SK-N-SH (cell line): ENCODE measurements at regions of chr5 and their contacts with region 1.

Region 1: DNA sequence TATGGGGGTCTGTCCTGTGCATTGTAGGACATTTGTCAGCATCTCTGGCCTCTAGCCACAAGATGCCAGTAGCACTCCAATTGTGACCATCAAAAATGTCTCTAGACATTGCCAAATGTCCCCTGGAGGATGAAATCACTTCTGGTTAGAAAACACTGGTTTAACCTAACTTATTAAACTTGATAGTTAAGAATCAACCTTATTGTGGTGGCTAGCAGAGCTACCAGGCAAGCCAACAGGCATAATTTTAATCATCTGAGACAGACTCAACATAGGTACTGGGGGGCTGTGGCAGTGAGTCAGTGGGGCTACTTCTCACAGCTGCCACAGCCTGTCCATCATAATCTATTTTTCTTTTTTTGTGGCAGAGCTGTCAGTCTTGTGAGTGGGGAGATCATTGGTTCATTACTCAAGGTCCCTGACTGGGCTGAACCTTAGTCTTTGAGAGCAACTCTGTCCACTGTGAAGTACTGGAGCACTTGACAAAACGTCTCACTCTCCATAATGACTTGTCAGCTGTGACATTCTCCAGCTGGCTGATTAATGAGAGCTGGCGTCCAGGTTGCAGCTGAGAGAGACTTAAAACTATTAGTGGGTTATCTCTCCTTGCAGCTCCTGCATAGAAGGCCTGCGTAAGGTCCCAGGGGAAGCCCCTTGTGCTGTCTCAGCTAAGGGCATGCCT is 107.9 kb downstream of the DCP2 start:
- DNase-seq: peak; percentile 51
- H3K4me3 ChIP-seq: no peak overlapping the region
- H3K27ac ChIP-seq: peak overlapping the region in 1 of 2 experiments; percentile 76; a peak in 2 of 4 replicates
- H3K4me1 ChIP-seq: peaks cover 0 to 18% of the 10 kb centered on the region in 2 experiments; a peak in 2 of 4 replicates
- H3K27me3 ChIP-seq: no peaks in the 10 kb centered on the region; the same call in 1 of the 2 replicates
- CTCF ChIP-seq: no peak
- EP300 ChIP-seq: peak in 1 of 2 experiments; percentile 82; a peak in 2 of 4 replicates
- RAD21 ChIP-seq: peak; percentile 62

Region 2: GRCh38 chr5:113100981-113101380 is 16.4 kb after region 1 on chr5:
- CTCF ChIA-PET with region 1: no interaction called
- POLR2A ChIA-PET with region 1: no interaction called
- DNase-seq: no peak
- H3K4me3 ChIP-seq: no peak overlapping the region
- H3K27ac ChIP-seq: no peak overlapping the region
- H3K4me1 ChIP-seq: peaks cover 0 to 3% of the 10 kb centered on the region in 2 experiments; a peak in 1 of 4 replicates
- H3K27me3 ChIP-seq: no peaks in the 10 kb centered on the region
- CTCF ChIP-seq: no peak
- EP300 ChIP-seq: no peak
- RAD21 ChIP-seq: no peak

Region 3: GRCh38 chr5:113330533-113331208 is 246.1 kb after region 1 on chr5:
- CTCF ChIA-PET with region 1: interaction called, 11 read pairs
- POLR2A ChIA-PET with region 1: no interaction called
- DNase-seq: peak; percentile 40
- H3K4me3 ChIP-seq: no peak overlapping the region
- H3K27ac ChIP-seq: no peak overlapping the region; a peak in 1 of 4 replicates
- H3K4me1 ChIP-seq: peaks cover 0 to 7% of the 10 kb centered on the region in 2 experiments; a peak in 2 of 4 replicates
- H3K27me3 ChIP-seq: no peaks in the 10 kb centered on the region
- CTCF ChIP-seq: peak; percentile 48
- EP300 ChIP-seq: no peak
- RAD21 ChIP-seq: peak; percentile 80

Region 4: GRCh38 chr5:113513384-113514288 is 429.1 kb after region 1 on chr5 and contains the start of gene YTHDC2:
- CTCF ChIA-PET with region 1: interaction called, 14 read pairs
- POLR2A ChIA-PET with region 1: interaction called, 3 read pairs
- DNase-seq: peak; percentile 89
- H3K4me3 ChIP-seq: peak within 1 kb of the TSS; percentile 78 to 92
- H3K27ac ChIP-seq: peak within 1 kb of the TSS; percentile 83
- H3K4me1 ChIP-seq: peaks cover 0 to 6% of the 10 kb centered on the region in 2 experiments; a peak in 2 of 4 replicates
- H3K27me3 ChIP-seq: no peaks in the 10 kb centered on the region; the same call in 1 of the 2 replicates
- CTCF ChIP-seq: peak; percentile 51
- EP300 ChIP-seq: no peak
- RAD21 ChIP-seq: peak; percentile 71
- polyA plus RNA-seq, gene YTHDC2: 3.5 and 4.7 TPM in 2 replicates